Endothelial cell of umbilical vein (primary cell): ENCODE measurements at regions of chr11 and their contacts with region 1.

Region 1: GRCh38 chr11:13114566-13115379 is 105.7 kb downstream of the RASSF10 start:
- DNase-seq: no peak
- H3K4me3 ChIP-seq: no peak overlapping the region
- H3K27ac ChIP-seq: no peak overlapping the region
- H3K4me1 ChIP-seq: peaks cover 53% of the 10 kb centered on the region
- H3K27me3 ChIP-seq: no peaks in the 10 kb centered on the region
- CTCF ChIP-seq: no peak
- POLR2A ChIP-seq: no peak

Region 2: DNA sequence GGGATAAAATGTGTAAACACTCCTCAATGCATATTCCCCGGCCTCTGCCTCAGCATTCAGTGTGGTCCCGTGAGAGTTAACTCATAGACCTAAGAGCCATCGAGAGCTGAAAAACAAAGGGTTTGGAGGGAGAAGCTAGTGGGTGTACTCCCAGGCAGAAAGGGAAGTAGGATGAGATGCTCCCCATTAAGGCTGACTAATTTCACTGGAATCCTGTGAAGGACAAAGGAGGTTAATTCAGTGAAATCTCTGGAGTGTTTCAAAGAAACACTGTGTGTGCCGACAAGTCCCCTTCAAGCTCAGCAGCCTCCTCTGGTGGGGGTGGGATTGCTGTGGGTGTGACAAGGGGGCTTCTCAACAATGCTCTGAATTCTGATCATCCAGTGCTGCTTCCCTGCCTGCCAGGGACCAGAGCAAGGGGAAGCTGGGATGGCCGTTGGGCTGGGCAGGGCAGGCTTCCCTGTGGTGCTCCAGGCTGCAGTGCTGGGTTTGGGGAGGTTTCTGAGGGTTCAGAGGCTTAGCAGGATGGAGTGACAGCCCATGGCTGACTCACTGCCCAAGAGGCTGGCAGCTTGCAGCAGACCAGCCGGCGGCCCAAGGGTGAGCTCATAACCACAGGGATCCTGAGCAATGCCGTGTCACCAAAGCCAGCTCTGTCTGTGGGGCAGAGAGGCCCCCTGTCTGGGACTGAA is 101.4 kb after region 1 on chr11:
- CTCF ChIA-PET with region 1: no interaction called
- POLR2A ChIA-PET with region 1: no interaction called
- dilution Hi-C with region 1: no loop called
- intact Hi-C with region 1: loop called (anchors 5 kb)
- DNase-seq: peak; percentile 66
- H3K4me3 ChIP-seq: peak overlapping the region in 1 of 3 experiments; percentile 17
- H3K27ac ChIP-seq: peak overlapping the region; percentile 99
- H3K4me1 ChIP-seq: peaks cover 20% of the 10 kb centered on the region
- H3K27me3 ChIP-seq: no peaks in the 10 kb centered on the region
- CTCF ChIP-seq: no peak
- POLR2A ChIP-seq: peak; percentile 53

Region 3: GRCh38 chr11:13440100-13440855 is 325.5 kb after region 1 on chr11:
- CTCF ChIA-PET with region 1: no interaction called
- POLR2A ChIA-PET with region 1: no interaction called
- dilution Hi-C with region 1: no loop called
- intact Hi-C with region 1: loop called (anchors 10 kb)
- DNase-seq: peak; percentile 96
- H3K4me3 ChIP-seq: peak overlapping the region in 1 of 3 experiments; percentile 4
- H3K27ac ChIP-seq: peak overlapping the region; percentile 49
- H3K4me1 ChIP-seq: peaks cover 21% of the 10 kb centered on the region
- H3K27me3 ChIP-seq: no peaks in the 10 kb centered on the region
- CTCF ChIP-seq: no peak
- POLR2A ChIP-seq: no peak